ENCODE measurements at regions of chr12 and their contacts with region 1.

Region 1: DNA sequence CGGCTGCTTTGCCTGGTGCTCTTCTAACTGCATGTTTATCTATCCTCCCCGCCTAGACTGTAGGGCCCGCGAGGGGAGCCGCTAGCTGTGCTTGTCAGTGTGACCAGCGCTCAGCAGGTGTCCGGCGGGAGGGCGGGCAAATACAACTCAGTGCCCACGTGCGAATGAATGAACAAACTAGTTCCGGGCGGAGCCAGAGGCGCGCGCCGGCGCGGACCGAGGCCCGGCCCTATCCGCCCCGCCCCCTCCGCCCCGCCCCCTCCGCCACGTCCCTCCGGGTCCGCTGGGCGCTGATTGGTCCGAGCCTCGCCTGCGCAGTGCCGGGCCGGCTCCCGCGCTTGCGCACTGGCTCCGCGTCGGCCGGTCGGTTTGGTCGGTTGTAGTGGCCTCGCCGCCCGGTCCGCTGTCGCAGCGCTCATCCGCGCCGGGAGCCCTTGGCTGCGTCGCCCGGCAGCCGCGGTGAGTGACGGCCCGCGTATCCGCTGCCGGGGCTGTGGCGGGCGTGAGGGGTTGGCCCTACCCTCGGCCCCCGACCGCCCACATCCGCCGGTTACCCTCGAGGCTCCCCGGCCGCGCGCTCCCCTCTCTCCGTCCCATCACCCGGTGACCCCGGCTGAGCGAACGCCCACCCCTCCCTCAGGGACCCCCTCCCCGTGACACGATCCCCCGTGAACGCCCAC is 60.0 kb downstream of the DDX51 start:
- DNase-seq: peak; percentile 81 to 93
- H3K4me3 ChIP-seq: peak overlapping the region; percentile 85 to 100
- H3K27ac ChIP-seq: peak overlapping the region; percentile 84 to 90
- H3K4me1 ChIP-seq: peaks cover 0 to 17% (median 13%) of the 10 kb centered on the region in 4 donors
- H3K27me3 ChIP-seq: no peaks in the 10 kb centered on the region
- CTCF ChIP-seq: no peak

Region 2: DNA sequence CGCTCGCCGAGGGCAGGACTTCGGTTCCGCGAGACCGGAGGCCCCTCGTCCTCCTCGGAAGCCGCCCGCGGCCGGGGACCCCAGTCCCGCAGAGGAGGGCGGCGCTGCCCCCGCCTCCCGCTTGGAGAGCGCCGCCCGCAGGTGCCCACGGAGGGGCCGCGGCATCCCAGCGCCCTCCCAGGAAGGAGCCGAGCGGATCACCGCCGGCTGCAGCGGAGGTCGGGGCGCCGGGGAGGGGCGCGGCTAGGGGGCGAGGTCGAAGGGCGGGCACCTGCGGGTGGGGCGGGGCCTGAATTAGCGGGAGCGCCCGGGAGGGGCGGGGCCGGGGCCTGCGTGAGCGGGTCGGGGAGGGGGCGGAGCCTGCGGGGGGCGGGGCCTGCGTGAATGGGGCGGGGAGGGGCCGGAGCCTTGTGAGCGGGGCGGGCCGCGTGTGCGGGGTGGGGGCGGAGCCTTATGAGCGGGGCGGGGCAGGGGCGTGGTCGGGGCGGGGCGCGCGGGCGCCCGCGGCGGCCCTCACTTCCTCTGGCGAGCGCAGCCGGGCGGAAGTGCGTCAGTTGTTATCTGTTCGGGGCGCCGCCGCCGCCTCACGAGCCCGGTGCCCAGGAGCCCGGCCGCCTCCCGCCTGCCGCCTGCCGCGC is 405.6 kb after region 1 on chr12 and contains the start of gene FBRSL1:
- intact Hi-C with region 1: loop called (anchors 5 kb)
- DNase-seq: peak; percentile 90 to 93
- H3K4me3 ChIP-seq: peak within 1 kb of the TSS; percentile 79 to 81
- H3K27ac ChIP-seq: peak within 1 kb of the TSS; percentile 59 to 71
- H3K4me1 ChIP-seq: peaks cover 0 to 53% (median 45%) of the 10 kb centered on the region in 4 donors
- H3K27me3 ChIP-seq: no peaks in the 10 kb centered on the region
- CTCF ChIP-seq: no peak

Measured in tibial artery (tissue), 4 donors.